Mammary epithelial cell (primary cell): ENCODE measurements at regions of chr17 and their contacts with region 1.

Region 1: GRCh38 chr17:41786227-41787020 is at the start of gene JUP:
- DNase-seq: peak; percentile 100
- H3K4me3 ChIP-seq: peak within 1 kb of the TSS; percentile 71 to 76 (median 75)
- H3K27ac ChIP-seq: peak within 1 kb of the TSS; percentile 99
- H3K4me1 ChIP-seq: peaks cover 47% of the 10 kb centered on the region
- H3K27me3 ChIP-seq: no peaks in the 10 kb centered on the region
- CTCF ChIP-seq: peak; percentile 43 to 49
- total RNA-seq, gene JUP: 444 to 578 TPM

Region 2: DNA sequence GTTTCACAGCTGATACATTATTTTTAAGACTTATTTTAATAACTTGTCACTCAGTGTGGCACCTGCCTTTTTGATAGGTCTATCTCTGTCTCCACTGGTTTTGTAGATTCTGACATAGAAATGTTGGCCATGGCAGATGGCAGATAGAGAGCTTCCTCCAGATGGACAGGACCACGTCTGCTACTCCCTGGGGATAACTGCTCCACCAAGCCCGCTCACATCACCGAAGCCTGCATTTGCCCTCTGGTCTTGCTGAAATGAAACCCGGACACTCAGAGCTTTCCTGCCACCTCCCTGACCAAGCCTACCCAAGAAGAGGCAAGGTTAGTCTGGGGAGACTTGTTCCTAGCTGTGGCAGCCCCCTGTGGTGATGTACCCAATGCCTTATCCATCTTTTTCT is 35.6 kb before region 1 on chr17:
- CTCF ChIA-PET with region 1: no interaction called
- dilution Hi-C with region 1: no loop called
- in situ Hi-C with region 1: no loop called
- intact Hi-C with region 1: loop called (anchors 2 kb)
- DNase-seq: no peak
- H3K4me3 ChIP-seq: no peak overlapping the region
- H3K27ac ChIP-seq: no peak overlapping the region
- H3K4me1 ChIP-seq: no peaks in the 10 kb centered on the region
- H3K27me3 ChIP-seq: no peaks in the 10 kb centered on the region
- CTCF ChIP-seq: no peak

Region 3: GRCh38 chr17:41773190-41773588 is 13.2 kb before region 1 on chr17:
- CTCF ChIA-PET with region 1: interaction called, 3 read pairs
- dilution Hi-C with region 1: no loop called
- in situ Hi-C with region 1: no loop called
- intact Hi-C with region 1: loop called (anchors 1 kb)
- DNase-seq: peak; percentile 99
- H3K4me3 ChIP-seq: no peak overlapping the region
- H3K27ac ChIP-seq: peak overlapping the region; percentile 93
- H3K4me1 ChIP-seq: peaks cover 63% of the 10 kb centered on the region
- H3K27me3 ChIP-seq: no peaks in the 10 kb centered on the region
- CTCF ChIP-seq: no peak

Region 4: GRCh38 chr17:41801374-41802271 is 15.2 kb after region 1 on chr17:
- CTCF ChIA-PET with region 1: interaction called, 39 read pairs
- dilution Hi-C with region 1: no loop called
- in situ Hi-C with region 1: no loop called
- intact Hi-C with region 1: loop called (anchors 1 kb)
- DNase-seq: peak; percentile 76
- H3K4me3 ChIP-seq: peak overlapping the region in 1 of 3 experiments; percentile 22
- H3K27ac ChIP-seq: peak overlapping the region; percentile 93
- H3K4me1 ChIP-seq: peaks cover 23% of the 10 kb centered on the region
- H3K27me3 ChIP-seq: no peaks in the 10 kb centered on the region
- CTCF ChIP-seq: peak; percentile 96 to 98

Region 5: DNA sequence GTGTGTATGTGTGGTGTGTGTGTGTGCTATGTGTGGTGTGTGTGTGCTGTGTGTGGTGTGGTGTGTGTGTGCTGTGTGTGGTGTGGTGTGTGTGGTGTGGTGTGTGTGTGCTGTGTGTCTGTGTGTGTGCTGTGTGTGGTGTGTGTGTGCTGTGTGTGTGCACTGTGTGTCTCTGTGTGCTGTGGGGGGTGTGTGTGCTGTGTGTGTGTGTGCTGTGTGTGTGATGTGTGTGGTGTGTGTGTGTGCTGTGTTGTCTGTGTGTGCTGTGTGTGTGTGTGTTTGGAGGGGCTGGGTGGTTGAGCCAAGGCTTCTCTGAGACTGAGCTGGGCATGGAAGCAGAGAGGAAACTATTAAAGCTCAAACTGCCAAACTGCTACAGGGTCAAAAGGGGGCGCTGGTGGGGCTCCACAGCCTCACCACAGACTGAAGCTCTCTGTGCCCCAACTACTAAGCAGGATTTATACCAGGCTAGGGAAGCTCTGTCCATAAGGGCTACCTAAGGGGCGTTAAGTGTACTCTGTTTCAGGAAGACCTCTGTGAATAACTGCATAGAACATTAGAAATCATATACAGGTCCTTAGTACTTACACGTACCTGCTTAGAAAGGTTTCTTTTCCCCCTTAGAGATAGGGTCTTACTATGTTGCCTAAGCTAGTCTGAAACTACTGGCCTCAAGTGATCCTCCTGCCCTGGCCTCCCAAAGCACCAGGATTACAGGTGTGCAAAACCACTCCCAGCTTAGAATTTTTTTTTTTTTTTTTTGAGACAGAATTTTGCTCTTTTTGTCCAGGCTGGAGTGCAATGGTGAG is 435.7 kb after region 1 on chr17:
- CTCF ChIA-PET with region 1: no interaction called
- dilution Hi-C with region 1: no loop called
- in situ Hi-C with region 1: no loop called
- intact Hi-C with region 1: no loop called
- DNase-seq: peak; percentile 17
- H3K4me3 ChIP-seq: no peak overlapping the region
- H3K27ac ChIP-seq: no peak overlapping the region
- H3K4me1 ChIP-seq: no peaks in the 10 kb centered on the region
- H3K27me3 ChIP-seq: no peaks in the 10 kb centered on the region
- CTCF ChIP-seq: peak; percentile 55 to 64